Activated T-helper 1 cell treated with anti-CD3 and anti-CD28 coated beads, Interleukin-12 subunit alpha, Interleukin-12 subunit beta, Interleukin-2, Interleukin-4 antibody, amounts not matched to agents 30 ng/mL and 10 ng/mL and 1 ng/mL, durations not matched to agents 14 hours and 24 hours and 36 hours (primary cell): ENCODE measurements at regions of chr12 and their contacts with region 1.

Region 1: DNA sequence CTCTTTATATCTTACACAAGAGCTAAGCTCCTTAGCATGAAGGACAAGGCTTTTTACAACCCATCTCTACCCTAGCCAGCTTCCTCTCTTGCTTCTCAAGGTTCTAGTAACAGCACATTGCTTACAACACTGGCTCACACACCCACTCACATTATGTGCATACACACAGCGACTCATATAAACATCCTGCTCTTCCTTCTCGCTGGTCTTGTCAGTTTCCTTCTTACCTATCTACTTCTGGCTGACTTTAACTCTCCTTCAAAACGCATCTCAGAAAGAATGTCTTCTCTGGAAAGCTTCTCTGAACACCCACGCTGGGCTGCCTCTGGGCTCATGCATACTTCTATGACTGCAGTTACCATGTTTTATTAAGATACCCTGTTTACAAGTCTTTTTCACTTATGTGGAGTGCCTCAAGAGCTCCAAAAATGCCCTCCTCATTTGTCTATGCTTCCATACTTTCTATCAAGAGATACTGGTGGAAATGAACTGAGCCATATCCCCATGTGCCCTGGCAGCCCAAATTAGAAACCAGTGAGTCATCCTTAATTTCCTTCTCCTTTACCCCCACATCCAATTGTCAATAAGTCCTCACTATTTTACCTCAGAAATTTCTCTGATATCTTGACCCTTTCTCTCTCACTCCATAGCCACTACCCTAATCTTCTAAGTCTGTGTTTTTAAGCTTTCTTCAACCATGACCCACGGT is 126.9 kb upstream of the KRAS start:
- DNase-seq: peak; percentile 37
- H3K4me3 Mint-ChIP-seq: peak overlapping the region; percentile 46
- H3K27ac Mint-ChIP-seq: peak overlapping the region; percentile 93
- H3K4me1 Mint-ChIP-seq: peaks cover 78% of the 10 kb centered on the region
- H3K27me3 Mint-ChIP-seq: no peaks in the 10 kb centered on the region

Region 2: DNA sequence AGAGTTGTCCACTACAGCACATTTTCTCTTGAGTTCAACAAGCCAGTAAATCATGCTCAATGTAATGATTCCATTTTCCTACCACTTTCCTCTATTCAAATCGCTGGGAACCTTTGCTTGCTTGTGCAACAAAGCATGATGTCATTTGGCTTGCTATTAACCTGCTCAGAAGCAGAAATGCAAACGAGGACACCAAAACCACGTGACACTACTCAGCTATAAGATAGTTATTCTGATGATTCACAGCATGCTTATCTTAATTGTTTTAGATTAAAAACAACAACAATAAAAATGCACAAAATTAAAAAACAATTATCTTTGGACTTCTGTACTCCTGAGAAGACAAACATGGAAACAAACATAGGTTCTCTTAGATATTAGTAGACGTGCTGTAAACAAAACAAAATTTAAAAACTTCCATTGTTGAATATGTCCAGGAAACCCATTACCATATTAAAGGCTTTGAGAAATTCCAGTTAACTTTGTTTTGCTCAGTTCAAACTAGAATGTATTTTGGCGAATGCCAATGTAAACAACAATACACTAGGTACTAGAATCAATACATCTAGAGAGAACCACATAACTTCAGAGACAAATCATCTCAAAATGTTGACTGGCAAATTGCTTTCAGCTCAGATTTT is 49.4 kb before region 1 on chr12:
- intact Hi-C with region 1: loop called (anchors 2 kb)
- DNase-seq: no peak
- H3K4me3 Mint-ChIP-seq: no peak overlapping the region
- H3K27ac Mint-ChIP-seq: no peak overlapping the region
- H3K4me1 Mint-ChIP-seq: peaks cover 18% of the 10 kb centered on the region
- H3K27me3 Mint-ChIP-seq: peaks cover 11% of the 10 kb centered on the region

Region 3: DNA sequence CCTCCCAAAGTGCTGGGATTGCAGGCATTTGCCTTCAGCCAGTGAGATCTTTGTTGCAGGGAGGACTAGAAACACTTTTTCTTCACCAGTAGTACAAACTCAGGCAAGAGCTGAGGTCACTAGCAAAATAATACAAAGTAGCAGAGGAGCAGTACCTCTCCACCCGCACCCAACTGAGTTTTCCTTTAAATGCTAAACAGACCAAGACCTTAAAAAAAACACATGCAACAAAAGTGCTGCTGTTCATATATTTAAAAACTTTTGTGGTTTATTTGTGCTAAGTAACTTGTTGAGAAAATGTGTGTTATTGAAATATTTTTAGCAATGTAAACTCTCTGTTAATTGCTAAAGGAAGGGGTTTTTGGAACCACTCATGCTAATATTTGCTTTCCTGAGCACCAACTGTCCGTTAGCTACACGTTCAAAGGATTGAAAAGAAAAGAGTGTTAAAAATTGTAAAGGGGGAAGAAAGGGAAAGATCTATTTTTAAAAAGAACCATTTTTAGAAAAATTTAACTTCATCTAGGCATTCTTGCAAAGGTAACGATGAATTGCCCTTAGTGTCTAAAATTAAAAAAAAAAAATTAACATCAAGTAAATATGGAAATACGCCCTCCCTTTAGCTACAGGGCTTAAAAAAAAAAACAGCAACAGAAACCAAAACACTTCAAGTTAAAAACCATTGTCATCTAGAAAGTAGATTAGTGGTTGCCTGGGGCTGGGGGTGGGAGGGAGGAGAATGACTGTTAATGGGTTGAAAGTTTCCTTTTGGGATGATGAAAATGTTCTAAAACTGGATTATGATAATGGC is 12.9 kb before region 1 on chr12:
- intact Hi-C with region 1: loop called (anchors 1 kb)
- DNase-seq: no peak
- H3K4me3 Mint-ChIP-seq: peak overlapping the region; percentile 36
- H3K27ac Mint-ChIP-seq: peak overlapping the region; percentile 94
- H3K4me1 Mint-ChIP-seq: peaks cover 45% of the 10 kb centered on the region
- H3K27me3 Mint-ChIP-seq: peaks cover 5% of the 10 kb centered on the region